ENCODE measurements at regions of chr2 and their contacts with region 1.

Region 1: GRCh38 chr2:45778720-45779171 is 127.3 kb downstream of the PRKCE start:
- DNase-seq: no peak
- ATAC-seq: peak; percentile 84 to 86
- H3K4me3 ChIP-seq: no peak overlapping the region
- H3K27ac ChIP-seq: no peak overlapping the region
- H3K4me1 ChIP-seq: peaks cover 35% of the 10 kb centered on the region
- H3K27me3 ChIP-seq: no peaks in the 10 kb centered on the region
- CTCF ChIP-seq: peak; percentile 79

Region 2: DNA sequence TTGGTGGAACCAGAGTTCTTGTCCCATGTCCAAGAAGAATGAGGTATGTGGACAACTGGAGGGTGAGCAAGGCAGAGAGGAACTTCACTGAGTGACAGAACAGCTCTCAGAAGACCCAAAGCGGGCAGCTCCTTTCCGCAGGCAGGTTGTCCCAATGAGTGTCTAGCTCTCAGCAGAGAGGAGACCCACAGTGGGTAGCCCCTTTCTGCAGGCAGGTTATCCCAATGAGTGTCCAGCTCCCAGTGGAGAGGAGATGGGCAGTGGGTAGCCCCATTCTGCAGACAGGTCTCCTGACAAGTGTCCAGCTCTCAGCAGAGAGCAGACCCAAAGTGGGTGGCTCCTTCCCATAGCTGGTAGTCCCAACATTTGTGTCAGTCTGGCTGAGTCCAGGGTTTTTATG is 237.3 kb before region 1 on chr2:
- intact Hi-C with region 1: no loop called
- DNase-seq: no peak
- ATAC-seq: no peak
- H3K4me3 ChIP-seq: no peak overlapping the region
- H3K27ac ChIP-seq: no peak overlapping the region
- H3K4me1 ChIP-seq: no peaks in the 10 kb centered on the region
- H3K27me3 ChIP-seq: no peaks in the 10 kb centered on the region
- CTCF ChIP-seq: no peak

Region 3: DNA sequence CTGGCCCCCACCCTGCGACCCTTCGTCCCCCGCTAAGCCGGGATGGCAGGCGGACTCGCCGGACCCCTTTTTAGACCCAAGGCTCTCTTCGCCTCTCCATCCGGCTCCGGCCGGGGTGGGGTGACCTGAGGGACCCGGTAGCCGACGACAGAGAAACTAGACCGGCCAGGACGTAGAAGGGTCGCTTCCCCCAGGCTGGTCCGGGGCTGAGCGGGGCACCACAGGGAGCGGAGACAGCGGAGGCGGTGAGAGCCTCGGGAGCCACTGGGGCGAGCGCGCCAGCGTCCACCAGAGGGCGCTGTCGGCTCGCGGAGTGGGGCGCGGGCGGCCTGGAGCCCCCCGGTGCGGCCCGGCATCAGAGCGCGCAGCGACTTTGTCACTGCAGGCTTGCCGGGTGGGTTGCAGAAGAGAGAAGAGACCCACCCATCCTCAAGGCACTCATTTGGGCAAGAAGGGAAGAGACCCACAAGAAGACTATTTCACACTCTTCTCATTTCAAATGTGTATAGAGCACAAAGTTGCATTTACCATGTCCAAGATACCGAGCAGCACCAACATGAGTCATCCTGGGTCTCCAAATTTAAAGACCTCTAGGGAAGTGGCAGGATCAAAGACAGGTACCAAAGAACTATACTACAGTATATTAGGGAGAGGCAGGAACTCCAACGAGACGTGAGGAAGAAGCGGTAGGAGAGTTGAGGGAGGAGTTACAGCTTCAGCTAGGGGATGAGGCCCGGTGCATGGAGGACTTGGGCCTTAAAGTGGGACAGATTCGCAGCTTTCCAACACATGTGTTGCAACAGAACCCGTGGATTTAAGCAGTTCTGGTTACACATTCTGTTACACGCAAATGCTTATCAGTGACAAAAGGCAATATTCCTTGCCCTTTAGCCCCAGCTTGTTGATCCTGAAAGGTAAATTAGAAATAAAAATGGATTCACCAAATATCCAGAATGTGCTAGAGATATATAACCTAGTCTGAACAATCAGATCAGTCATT is 134.9 kb before region 1 on chr2:
- intact Hi-C with region 1: loop called (anchors 10 kb)
- DNase-seq: peak; percentile 82
- ATAC-seq: peak; percentile 98 to 99
- H3K4me3 ChIP-seq: peak overlapping the region; percentile 63
- H3K27ac ChIP-seq: peak overlapping the region; percentile 47
- H3K4me1 ChIP-seq: peaks cover 25% of the 10 kb centered on the region
- H3K27me3 ChIP-seq: peaks cover 7% of the 10 kb centered on the region
- CTCF ChIP-seq: peak; percentile 98

Region 4: DNA sequence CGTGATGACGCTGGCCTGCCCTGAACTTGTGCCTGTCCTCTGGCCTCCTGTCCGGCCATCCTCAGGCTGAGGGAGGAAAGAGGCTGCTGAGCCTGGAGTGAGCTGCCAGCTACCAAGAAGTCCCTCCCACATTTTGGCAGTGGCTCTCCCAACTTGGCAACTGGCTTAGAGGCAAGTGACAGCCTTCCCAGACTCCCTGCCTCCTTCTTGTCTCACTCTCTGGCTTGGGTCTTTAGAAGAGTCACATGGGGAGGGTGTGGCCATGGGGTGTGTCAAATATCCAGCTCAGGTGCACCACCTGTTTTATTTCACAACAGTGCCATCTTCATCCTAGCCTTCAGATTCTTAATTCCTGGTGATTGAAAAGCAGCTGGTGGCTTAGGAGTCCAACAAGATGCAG is 95.6 kb after region 1 on chr2:
- intact Hi-C with region 1: no loop called
- DNase-seq: no peak
- ATAC-seq: peak; percentile 26 to 64
- H3K4me3 ChIP-seq: no peak overlapping the region
- H3K27ac ChIP-seq: no peak overlapping the region
- H3K4me1 ChIP-seq: peaks cover 12% of the 10 kb centered on the region
- H3K27me3 ChIP-seq: no peaks in the 10 kb centered on the region
- CTCF ChIP-seq: no peak

Measured in lower lobe of right lung (tissue), 2 donors.